ENCODE measurements at regions of chr21 and their contacts with region 1.

Region 1: GRCh38 chr21:36209626-36210171 is 53.1 kb downstream of the DOP1B start:
- DNase-seq: peak; percentile 68
- ATAC-seq: peak; percentile 73
- H3K4me3 Mint-ChIP-seq: no peak overlapping the region
- H3K27ac Mint-ChIP-seq: peak overlapping the region; percentile 48; the same call in 1 of the 2 replicates
- H3K4me1 Mint-ChIP-seq: peaks cover 13% of the 10 kb centered on the region
- H3K27me3 Mint-ChIP-seq: no peaks in the 10 kb centered on the region
- CTCF ChIP-seq: peak; percentile 35; the same call in 1 of the 2 replicates

Region 2: DNA sequence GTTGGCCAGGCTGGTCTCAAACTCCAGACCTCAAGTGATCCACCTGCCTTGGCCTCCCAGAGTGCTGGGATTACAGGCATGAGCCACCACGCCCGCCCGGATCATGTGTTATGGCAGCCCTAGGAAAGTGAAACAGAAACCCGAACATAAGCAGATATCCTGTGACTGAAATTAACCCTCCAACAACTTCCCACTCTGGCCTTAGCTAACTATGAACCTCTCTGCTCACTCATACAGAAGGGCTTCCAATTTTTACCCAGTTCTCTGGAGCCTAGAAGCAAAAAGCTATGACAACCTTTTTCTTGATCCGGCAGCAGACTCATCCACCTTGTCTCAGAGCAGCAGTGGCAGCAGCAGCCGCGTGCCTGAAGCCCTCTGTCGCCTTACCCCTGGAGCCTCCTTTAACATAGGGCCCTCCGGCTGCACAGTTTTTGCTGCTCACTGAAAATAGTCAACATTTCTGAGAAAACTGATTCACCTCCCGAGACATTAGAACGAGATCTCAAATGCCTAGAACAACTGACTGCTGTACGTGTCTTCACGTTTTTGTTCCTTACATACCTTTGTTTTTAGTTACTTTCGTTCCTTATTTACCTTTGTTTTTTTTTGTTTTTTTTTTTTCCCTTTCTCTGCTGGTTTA is 130.6 kb before region 1 on chr21:
- CTCF ChIA-PET with region 1: no interaction called
- POLR2A ChIA-PET with region 1: no interaction called
- DNase-seq: no peak
- ATAC-seq: no peak
- H3K4me3 Mint-ChIP-seq: no peak overlapping the region
- H3K27ac Mint-ChIP-seq: no peak overlapping the region; the same call in 1 of the 2 replicates
- H3K4me1 Mint-ChIP-seq: peaks cover 31% of the 10 kb centered on the region
- H3K27me3 Mint-ChIP-seq: no peaks in the 10 kb centered on the region; the same call in 1 of the 2 replicates
- CTCF ChIP-seq: no peak

Region 3: GRCh38 chr21:36135391-36136102 is 74.2 kb before region 1 on chr21:
- CTCF ChIA-PET with region 1: interaction called, 63 read pairs
- POLR2A ChIA-PET with region 1: no interaction called
- DNase-seq: peak; percentile 52
- ATAC-seq: peak; percentile 46
- H3K4me3 Mint-ChIP-seq: peak overlapping the region; percentile 81
- H3K27ac Mint-ChIP-seq: no peak overlapping the region; the same call in 1 of the 2 replicates
- H3K4me1 Mint-ChIP-seq: peaks cover 34% of the 10 kb centered on the region
- H3K27me3 Mint-ChIP-seq: peaks cover 43% of the 10 kb centered on the region
- CTCF ChIP-seq: no peak

Region 4: GRCh38 chr21:36149788-36150711 is 59.6 kb before region 1 on chr21:
- CTCF ChIA-PET with region 1: interaction called, 59 read pairs
- POLR2A ChIA-PET with region 1: no interaction called
- DNase-seq: no peak
- ATAC-seq: peak; percentile 66
- H3K4me3 Mint-ChIP-seq: no peak overlapping the region
- H3K27ac Mint-ChIP-seq: peak overlapping the region; percentile 55
- H3K4me1 Mint-ChIP-seq: peaks cover 15% of the 10 kb centered on the region
- H3K27me3 Mint-ChIP-seq: peaks cover 14% of the 10 kb centered on the region
- CTCF ChIP-seq: no peak

Region 5: GRCh38 chr21:36171741-36172331 is 37.9 kb before region 1 on chr21:
- CTCF ChIA-PET with region 1: interaction called, 13 read pairs
- POLR2A ChIA-PET with region 1: no interaction called
- DNase-seq: no peak
- ATAC-seq: no peak
- H3K4me3 Mint-ChIP-seq: no peak overlapping the region
- H3K27ac Mint-ChIP-seq: 0 out of 2 replicates have a peak overlapping the region, but pooled peaks have one; percentile 0
- H3K4me1 Mint-ChIP-seq: no peaks in the 10 kb centered on the region
- H3K27me3 Mint-ChIP-seq: no peaks in the 10 kb centered on the region
- CTCF ChIP-seq: no peak

Region 6: GRCh38 chr21:36190736-36191135 is 19.0 kb before region 1 on chr21:
- CTCF ChIA-PET with region 1: interaction called, 11 read pairs
- POLR2A ChIA-PET with region 1: no interaction called
- DNase-seq: no peak
- ATAC-seq: no peak
- H3K4me3 Mint-ChIP-seq: no peak overlapping the region
- H3K27ac Mint-ChIP-seq: no peak overlapping the region
- H3K4me1 Mint-ChIP-seq: peaks cover 16% of the 10 kb centered on the region
- H3K27me3 Mint-ChIP-seq: no peaks in the 10 kb centered on the region
- CTCF ChIP-seq: no peak

Region 7: GRCh38 chr21:36274128-36274527 is 64.4 kb after region 1 on chr21:
- CTCF ChIA-PET with region 1: no interaction called
- POLR2A ChIA-PET with region 1: no interaction called
- DNase-seq: no peak
- ATAC-seq: no peak
- H3K4me3 Mint-ChIP-seq: no peak overlapping the region
- H3K27ac Mint-ChIP-seq: no peak overlapping the region
- H3K4me1 Mint-ChIP-seq: no peaks in the 10 kb centered on the region
- H3K27me3 Mint-ChIP-seq: no peaks in the 10 kb centered on the region
- CTCF ChIP-seq: no peak

Region 8: DNA sequence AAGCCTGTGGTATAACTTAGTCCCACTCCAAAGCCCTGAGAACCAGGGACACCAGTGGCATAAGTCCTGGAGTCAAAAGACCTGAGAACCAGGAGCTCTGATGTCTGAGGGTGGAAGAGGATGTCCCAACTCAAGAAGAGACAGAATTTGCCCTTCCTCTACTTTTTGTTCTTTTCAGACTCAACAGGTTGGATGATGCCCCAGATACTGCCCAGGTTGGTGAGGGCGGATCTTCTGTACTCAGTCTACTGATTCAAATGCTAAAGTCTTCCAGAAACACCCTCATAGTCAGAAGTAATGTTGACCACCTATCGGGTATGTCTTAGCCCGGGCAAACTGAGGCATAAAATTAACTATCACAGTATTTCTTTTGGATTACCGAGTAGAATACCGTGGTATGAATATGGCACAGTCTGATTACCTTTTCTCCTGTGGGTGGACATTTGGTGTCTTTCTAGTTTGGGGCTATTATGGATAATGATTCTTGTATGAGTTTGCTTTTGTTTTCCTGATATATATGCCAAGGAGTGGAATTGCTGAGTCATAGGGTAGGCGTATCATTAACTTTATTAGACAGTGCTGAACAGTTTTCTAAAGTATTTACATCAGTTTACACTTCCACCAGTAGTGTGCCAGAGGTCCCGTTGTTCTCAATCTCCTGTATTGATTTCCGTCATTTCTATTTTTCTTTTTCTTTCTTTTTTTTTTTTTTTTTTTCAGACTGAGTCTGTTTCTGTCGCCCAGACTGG is 172.3 kb after region 1 on chr21:
- CTCF ChIA-PET with region 1: no interaction called
- POLR2A ChIA-PET with region 1: no interaction called
- DNase-seq: no peak
- ATAC-seq: no peak
- H3K4me3 Mint-ChIP-seq: no peak overlapping the region
- H3K27ac Mint-ChIP-seq: no peak overlapping the region
- H3K4me1 Mint-ChIP-seq: peaks cover 5% of the 10 kb centered on the region
- H3K27me3 Mint-ChIP-seq: no peaks in the 10 kb centered on the region; the same call in 1 of the 2 replicates
- CTCF ChIP-seq: no peak

Region 9: DNA sequence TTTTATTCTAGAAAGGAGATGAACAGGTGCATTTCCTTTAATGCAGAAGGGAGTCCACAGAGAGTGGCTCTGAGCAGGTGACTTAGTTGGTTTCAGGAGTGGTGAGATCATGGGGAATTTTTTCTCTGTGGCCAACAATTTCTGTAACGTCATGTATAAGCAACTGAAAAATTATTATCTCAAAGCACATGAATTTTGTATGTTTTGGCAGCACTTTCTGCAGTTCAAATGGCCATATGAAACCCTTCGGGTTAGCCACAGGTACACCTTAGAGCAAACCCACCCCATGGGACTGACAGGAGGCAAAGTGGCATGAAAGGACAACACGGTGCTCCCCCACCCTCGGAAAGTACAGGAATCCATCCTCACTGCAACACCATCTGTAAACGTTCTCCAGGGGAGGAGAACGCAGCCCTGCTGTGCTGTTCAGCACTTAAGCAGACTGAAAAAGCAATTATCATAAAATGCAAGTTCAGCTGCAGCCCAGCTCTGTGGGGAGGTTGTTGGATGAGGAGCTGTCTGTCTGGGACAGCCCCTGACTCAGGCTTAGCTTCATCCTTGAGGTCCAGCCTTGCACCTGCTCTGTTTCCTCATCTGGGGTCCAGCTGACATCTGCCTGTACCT is 326.0 kb after region 1 on chr21:
- CTCF ChIA-PET with region 1: no interaction called
- POLR2A ChIA-PET with region 1: no interaction called
- DNase-seq: no peak
- ATAC-seq: no peak; the same call in 1 of the 2 replicates
- H3K4me3 Mint-ChIP-seq: no peak overlapping the region
- H3K27ac Mint-ChIP-seq: no peak overlapping the region
- H3K4me1 Mint-ChIP-seq: peaks cover 16% of the 10 kb centered on the region
- H3K27me3 Mint-ChIP-seq: no peaks in the 10 kb centered on the region; the same call in 1 of the 2 replicates
- CTCF ChIP-seq: no peak